Naive thymus-derived CD4-positive, alpha-beta T cell (primary cell): ENCODE measurements at regions of chr4 and their contacts with region 1.

Region 1: DNA sequence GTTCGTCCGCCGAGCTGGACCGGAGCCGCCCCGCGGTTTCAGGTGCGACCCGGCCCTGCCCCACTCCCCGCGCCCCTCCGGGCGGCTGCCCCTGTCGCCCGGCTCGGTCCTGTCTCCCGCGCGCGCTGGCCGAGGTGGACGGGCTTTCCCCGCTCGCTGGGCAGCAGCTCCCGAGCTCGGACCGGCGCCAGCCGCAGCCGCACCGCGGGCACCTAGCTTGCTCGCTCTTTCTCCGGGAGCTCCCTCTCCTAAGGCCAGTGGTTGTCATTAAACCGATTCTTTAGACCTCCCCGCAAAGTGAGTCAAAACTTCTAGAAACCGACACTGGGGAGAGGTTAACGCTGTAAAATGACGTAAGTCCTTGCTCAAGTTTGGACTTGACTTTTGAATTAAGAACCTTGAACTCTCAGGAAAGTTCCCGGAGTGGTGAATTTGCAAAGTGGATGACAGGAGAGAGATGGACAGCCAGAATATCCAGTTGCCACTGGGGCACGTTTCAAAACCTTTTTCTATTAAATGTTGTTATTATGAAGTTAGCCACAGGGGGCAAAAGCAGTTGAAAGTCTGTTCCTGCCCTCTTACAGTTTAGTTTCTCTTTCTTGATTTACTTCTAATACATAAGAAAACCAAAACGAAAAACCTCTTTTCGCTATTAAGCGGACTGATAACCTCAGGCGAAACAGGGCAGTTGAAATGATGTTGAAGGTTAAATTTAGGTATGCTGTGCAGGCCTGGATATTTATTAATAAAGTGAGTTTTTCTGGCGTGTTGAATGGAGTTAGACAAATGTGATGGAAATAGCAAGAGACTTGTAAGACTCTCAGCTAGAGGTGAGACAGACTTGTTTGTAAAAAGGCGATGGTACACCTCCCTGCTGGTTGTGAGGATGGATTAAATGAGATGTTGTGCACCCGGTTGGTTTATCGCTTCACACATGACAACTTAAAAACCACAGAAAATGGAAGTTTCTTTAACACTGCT is 847 bp downstream of the PI4K2B start:
- DNase-seq: peak; percentile 20 to 76 (median 64)
- ATAC-seq: peak; percentile 70
- H3K4me3 ChIP-seq: peak overlapping the region; percentile 80
- H3K4me3 Mint-ChIP-seq: peak overlapping the region; percentile 86 to 99 (median 94)
- H3K27ac ChIP-seq: peak overlapping the region; percentile 89
- H3K27ac Mint-ChIP-seq: peak overlapping the region; percentile 89 to 98 (median 95)
- H3K4me1 ChIP-seq: peaks cover 16 to 29% of the 10 kb centered on the region in 2 donors
- H3K4me1 Mint-ChIP-seq: peaks cover 16 to 57% (median 44%) of the 10 kb centered on the region in 7 donors
- H3K27me3 ChIP-seq: no peaks in the 10 kb centered on the region
- H3K27me3 Mint-ChIP-seq: no peaks in the 10 kb centered on the region

Region 2: GRCh38 chr4:24607334-24607733 is 627.3 kb before region 1 on chr4:
- CTCF ChIA-PET with region 1: no interaction called
- POLR2A ChIA-PET with region 1: no interaction called
- intact Hi-C with region 1: no loop called
- DNase-seq: no peak
- ATAC-seq: no peak
- H3K4me3 ChIP-seq: no peak overlapping the region
- H3K4me3 Mint-ChIP-seq: no peak overlapping the region
- H3K27ac ChIP-seq: no peak overlapping the region
- H3K27ac Mint-ChIP-seq: no peak overlapping the region
- H3K4me1 ChIP-seq: no peaks in the 10 kb centered on the region
- H3K4me1 Mint-ChIP-seq: peaks cover 0 to 12% (median 6%) of the 10 kb centered on the region in 7 donors
- H3K27me3 ChIP-seq: no peaks in the 10 kb centered on the region
- H3K27me3 Mint-ChIP-seq: peaks cover 0 to 5% (median 4%) of the 10 kb centered on the region in 5 donors

Region 3: GRCh38 chr4:24980064-24980690 is 254.5 kb before region 1 on chr4:
- CTCF ChIA-PET with region 1: interaction called, 5 read pairs
- POLR2A ChIA-PET with region 1: no interaction called
- intact Hi-C with region 1: loop called in 1 of 2 experiments (anchors 2 kb)
- DNase-seq: peak in 8 of 9 donors; percentile 18 to 61 (median 48)
- ATAC-seq: peak; percentile 75
- H3K4me3 ChIP-seq: no peak overlapping the region
- H3K4me3 Mint-ChIP-seq: peak overlapping the region in 9 of 10 donors; percentile 58 to 80 (median 65)
- H3K27ac ChIP-seq: no peak overlapping the region
- H3K27ac Mint-ChIP-seq: peak overlapping the region in 1 of 9 donors; percentile 12
- H3K4me1 ChIP-seq: peaks cover 0 to 3% of the 10 kb centered on the region in 2 donors
- H3K4me1 Mint-ChIP-seq: peaks cover 0 to 15% (median 12%) of the 10 kb centered on the region in 7 donors
- H3K27me3 ChIP-seq: no peaks in the 10 kb centered on the region
- H3K27me3 Mint-ChIP-seq: peaks cover 19 to 37% (median 33%) of the 10 kb centered on the region in 5 donors

Region 4: GRCh38 chr4:25103418-25103817 is 131.3 kb before region 1 on chr4:
- CTCF ChIA-PET with region 1: no interaction called
- POLR2A ChIA-PET with region 1: no interaction called
- intact Hi-C with region 1: no loop called
- DNase-seq: no peak
- ATAC-seq: no peak
- H3K4me3 ChIP-seq: no peak overlapping the region
- H3K4me3 Mint-ChIP-seq: no peak overlapping the region
- H3K27ac ChIP-seq: no peak overlapping the region
- H3K27ac Mint-ChIP-seq: no peak overlapping the region
- H3K4me1 ChIP-seq: no peaks in the 10 kb centered on the region
- H3K4me1 Mint-ChIP-seq: peaks cover 0 to 7% (median 4%) of the 10 kb centered on the region in 7 donors
- H3K27me3 ChIP-seq: no peaks in the 10 kb centered on the region
- H3K27me3 Mint-ChIP-seq: peaks cover 0 to 15% (median 2%) of the 10 kb centered on the region in 5 donors

Region 5: GRCh38 chr4:25180524-25181131 is 54.1 kb before region 1 on chr4:
- CTCF ChIA-PET with region 1: interaction called, 6 read pairs
- POLR2A ChIA-PET with region 1: interaction called, 3 read pairs
- intact Hi-C with region 1: loop called (anchors 1 kb)
- DNase-seq: peak in 5 of 9 donors; percentile 14 to 39 (median 26)
- ATAC-seq: peak; percentile 80
- H3K4me3 ChIP-seq: no peak overlapping the region
- H3K4me3 Mint-ChIP-seq: no peak overlapping the region
- H3K27ac ChIP-seq: no peak overlapping the region
- H3K27ac Mint-ChIP-seq: no peak overlapping the region
- H3K4me1 ChIP-seq: peaks cover 4 to 16% of the 10 kb centered on the region in 2 donors
- H3K4me1 Mint-ChIP-seq: peaks cover 22 to 63% (median 47%) of the 10 kb centered on the region in 7 donors
- H3K27me3 ChIP-seq: no peaks in the 10 kb centered on the region
- H3K27me3 Mint-ChIP-seq: no peaks in the 10 kb centered on the region

Region 6: DNA sequence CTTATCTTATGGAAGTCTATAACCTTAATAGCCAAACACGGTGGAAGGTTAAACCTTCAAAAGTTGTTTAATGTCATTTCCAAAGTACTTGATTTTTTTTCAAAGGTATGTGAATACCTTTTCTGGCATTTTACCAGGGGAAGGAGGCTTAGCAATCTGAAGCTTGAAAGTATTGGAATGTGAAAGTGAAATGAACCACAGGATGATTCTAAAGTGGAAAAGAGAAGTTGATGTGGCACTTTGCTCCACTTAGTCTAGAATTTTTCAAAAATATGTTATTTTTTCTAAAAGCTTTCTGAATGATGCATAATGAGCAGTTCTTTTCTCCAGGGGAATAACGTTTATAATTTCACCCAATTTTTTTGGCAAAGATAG is 18.4 kb after region 1 on chr4:
- CTCF ChIA-PET with region 1: no interaction called
- POLR2A ChIA-PET with region 1: no interaction called
- intact Hi-C with region 1: loop called (anchors 1 to 2 kb)
- DNase-seq: no peak
- ATAC-seq: no peak
- H3K4me3 ChIP-seq: no peak overlapping the region
- H3K4me3 Mint-ChIP-seq: no peak overlapping the region
- H3K27ac ChIP-seq: no peak overlapping the region
- H3K27ac Mint-ChIP-seq: peak overlapping the region in 2 of 9 donors; percentile 2 to 56
- H3K4me1 ChIP-seq: no peaks in the 10 kb centered on the region
- H3K4me1 Mint-ChIP-seq: peaks cover 12 to 36% (median 30%) of the 10 kb centered on the region in 7 donors
- H3K27me3 ChIP-seq: no peaks in the 10 kb centered on the region
- H3K27me3 Mint-ChIP-seq: no peaks in the 10 kb centered on the region

Region 7: GRCh38 chr4:25376754-25377571 is 142.3 kb after region 1 on chr4 and contains the start of gene ANAPC4:
- CTCF ChIA-PET with region 1: no interaction called
- POLR2A ChIA-PET with region 1: no interaction called
- intact Hi-C with region 1: loop called (anchors 1 kb)
- DNase-seq: peak; percentile 85 to 97 (median 92)
- ATAC-seq: peak; percentile 97
- H3K4me3 ChIP-seq: peak within 1 kb of the TSS; percentile 96
- H3K4me3 Mint-ChIP-seq: peak within 1 kb of the TSS in 2 of 10 donors; percentile 78 to 83
- H3K27ac ChIP-seq: peak within 1 kb of the TSS; percentile 76
- H3K27ac Mint-ChIP-seq: peak within 1 kb of the TSS in 7 of 9 donors; percentile 64 to 93 (median 83)
- H3K4me1 ChIP-seq: peaks cover 11 to 17% of the 10 kb centered on the region in 2 donors
- H3K4me1 Mint-ChIP-seq: peaks cover 0 to 18% (median 13%) of the 10 kb centered on the region in 7 donors
- H3K27me3 ChIP-seq: no peaks in the 10 kb centered on the region
- H3K27me3 Mint-ChIP-seq: no peaks in the 10 kb centered on the region
- total RNA-seq, gene ANAPC4: 40.6 to 55.3 (median 50.4) TPM

Region 8: GRCh38 chr4:26583865-26584652 is 1349.4 kb after region 1 on chr4 and contains the start of gene TBC1D19:
- CTCF ChIA-PET with region 1: no interaction called
- POLR2A ChIA-PET with region 1: no interaction called
- intact Hi-C with region 1: loop called (anchors 5 kb)
- DNase-seq: peak; percentile 77 to 92 (median 87)
- ATAC-seq: peak; percentile 96
- H3K4me3 ChIP-seq: peak within 1 kb of the TSS; percentile 83
- H3K4me3 Mint-ChIP-seq: peak within 1 kb of the TSS; percentile 86 to 98 (median 95)
- H3K27ac ChIP-seq: peak within 1 kb of the TSS; percentile 92
- H3K27ac Mint-ChIP-seq: peak within 1 kb of the TSS; percentile 96 to 100 (median 98)
- H3K4me1 ChIP-seq: peaks cover 10 to 11% of the 10 kb centered on the region in 2 donors
- H3K4me1 Mint-ChIP-seq: peaks cover 10 to 51% (median 28%) of the 10 kb centered on the region in 7 donors
- H3K27me3 ChIP-seq: no peaks in the 10 kb centered on the region
- H3K27me3 Mint-ChIP-seq: peaks cover 0 to 5% (median 0%) of the 10 kb centered on the region in 5 donors
- total RNA-seq, gene TBC1D19: 4.9 to 8.7 (median 6.4) TPM